Sigmoid colon (tissue), 7 donors: ENCODE measurements at regions of chr19 and their contacts with region 1.

Region 1: DNA sequence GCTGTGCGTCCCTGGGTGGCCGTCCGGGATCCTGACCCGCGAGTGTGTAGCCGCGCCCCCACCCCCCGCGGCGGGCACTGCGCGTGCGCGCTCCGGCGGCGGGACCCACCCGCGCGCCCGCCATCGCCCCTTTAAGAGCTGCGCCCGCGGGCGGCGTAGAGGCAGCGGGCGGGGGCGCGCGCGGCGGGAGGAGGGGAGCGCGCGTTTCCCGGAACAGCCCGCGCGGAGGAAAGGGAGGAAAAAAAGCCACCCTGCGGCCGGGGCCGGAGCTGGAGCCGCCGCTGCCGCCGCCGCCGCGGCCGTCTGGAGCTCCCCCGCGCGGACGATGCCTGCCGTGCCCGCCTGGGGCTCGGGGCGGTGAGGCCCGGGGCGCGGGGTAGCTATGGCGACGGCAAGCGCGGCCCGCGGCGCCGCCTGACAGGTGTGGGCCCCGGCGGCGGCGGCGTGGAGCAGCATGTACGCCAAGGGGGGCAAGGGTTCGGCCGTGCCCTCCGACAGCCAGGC is at the start of gene SSBP4:
- DNase-seq: no peak
- H3K4me3 ChIP-seq: peak within 1 kb of the TSS; percentile 41 to 74 (median 64)
- H3K27ac ChIP-seq: peak within 1 kb of the TSS; percentile 82 to 88 (median 86)
- H3K4me1 ChIP-seq: peaks cover 0 to 79% (median 69%) of the 10 kb centered on the region in 4 donors
- H3K27me3 ChIP-seq: peaks cover 0 to 29% (median 3%) of the 10 kb centered on the region in 3 donors
- CTCF ChIP-seq: peak in 1 of 4 experiments; percentile 14
- EP300 ChIP-seq: no peak
- POLR2A ChIP-seq: no peak
- total RNA-seq, gene SSBP4: 52.4 to 71.4 (median 58.0) TPM

Region 2: DNA sequence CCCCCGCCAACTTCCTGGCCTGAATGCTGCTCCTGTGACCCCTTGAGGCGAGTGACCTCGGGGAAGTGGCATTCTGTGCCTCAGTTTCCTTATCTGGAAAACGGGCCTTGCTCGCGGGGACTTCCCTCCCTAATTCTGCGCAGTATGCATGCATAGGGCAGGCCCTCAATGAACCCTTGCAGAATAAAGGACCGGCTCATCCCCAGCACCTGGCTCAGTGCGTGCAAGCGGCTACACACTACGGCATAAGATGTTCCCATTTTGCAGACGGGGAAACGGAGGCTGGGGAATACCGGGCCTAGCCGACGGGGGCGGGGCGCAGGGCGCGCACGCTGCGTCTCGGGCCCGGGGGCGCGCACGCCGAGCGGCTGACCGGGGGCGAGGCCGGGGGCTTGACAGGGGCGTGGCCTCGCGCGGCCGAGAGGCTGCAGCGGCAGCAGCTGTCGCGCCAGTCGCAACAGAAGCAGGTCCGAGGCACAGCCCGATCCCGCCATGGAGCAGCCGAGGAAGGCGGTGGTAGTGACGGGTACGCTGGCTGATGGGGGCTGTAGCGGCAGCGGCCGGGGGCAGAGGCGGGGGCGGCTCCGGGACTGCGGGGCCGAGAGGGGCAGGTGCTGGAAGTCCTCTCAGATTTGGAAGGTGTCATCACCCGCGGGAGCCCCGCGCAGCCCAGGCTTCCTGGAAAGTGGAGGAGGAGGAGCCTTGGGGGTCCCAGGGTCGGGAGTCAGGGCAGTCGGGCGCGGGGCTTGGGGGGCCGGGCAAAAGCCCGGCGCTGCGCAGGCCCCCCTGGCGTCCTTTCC is 78.9 kb before region 1 on chr19 and contains the start of gene PGPEP1:
- intact Hi-C with region 1: loop called (anchors 5 kb)
- DNase-seq: peak; percentile 80
- H3K4me3 ChIP-seq: peak within 1 kb of the TSS; percentile 75 to 86 (median 82)
- H3K27ac ChIP-seq: peak within 1 kb of the TSS; percentile 78 to 89 (median 80)
- H3K4me1 ChIP-seq: peaks cover 0 to 22% (median 12%) of the 10 kb centered on the region in 4 donors
- H3K27me3 ChIP-seq: no peaks in the 10 kb centered on the region
- CTCF ChIP-seq: no peak
- EP300 ChIP-seq: no peak
- POLR2A ChIP-seq: peak; percentile 27 to 49
- total RNA-seq, gene PGPEP1: 15.0 to 26.0 (median 16.6) TPM